ENCODE measurements at regions of chr16 and their contacts with region 1.

Region 1: GRCh38 chr16:81723098-81723723 is 55.9 kb upstream of the PLCG2 start:
- DNase-seq: peak in 1 of 10 donors; percentile 30
- H3K4me3 ChIP-seq: no peak overlapping the region
- H3K27ac ChIP-seq: no peak overlapping the region
- H3K27me3 ChIP-seq: no peaks in the 10 kb centered on the region
- CTCF ChIP-seq: peak; percentile 13 to 96 (median 85)

Region 2: GRCh38 chr16:81366316-81366932 is 356.8 kb before region 1 on chr16:
- intact Hi-C with region 1: loop called in 1 of 2 experiments (anchors 2 kb)
- DNase-seq: peak in 1 of 10 donors; percentile 9
- H3K4me3 ChIP-seq: no peak overlapping the region
- H3K27ac ChIP-seq: no peak overlapping the region
- H3K27me3 ChIP-seq: no peaks in the 10 kb centered on the region
- CTCF ChIP-seq: peak; percentile 61 to 90 (median 76)

Region 3: DNA sequence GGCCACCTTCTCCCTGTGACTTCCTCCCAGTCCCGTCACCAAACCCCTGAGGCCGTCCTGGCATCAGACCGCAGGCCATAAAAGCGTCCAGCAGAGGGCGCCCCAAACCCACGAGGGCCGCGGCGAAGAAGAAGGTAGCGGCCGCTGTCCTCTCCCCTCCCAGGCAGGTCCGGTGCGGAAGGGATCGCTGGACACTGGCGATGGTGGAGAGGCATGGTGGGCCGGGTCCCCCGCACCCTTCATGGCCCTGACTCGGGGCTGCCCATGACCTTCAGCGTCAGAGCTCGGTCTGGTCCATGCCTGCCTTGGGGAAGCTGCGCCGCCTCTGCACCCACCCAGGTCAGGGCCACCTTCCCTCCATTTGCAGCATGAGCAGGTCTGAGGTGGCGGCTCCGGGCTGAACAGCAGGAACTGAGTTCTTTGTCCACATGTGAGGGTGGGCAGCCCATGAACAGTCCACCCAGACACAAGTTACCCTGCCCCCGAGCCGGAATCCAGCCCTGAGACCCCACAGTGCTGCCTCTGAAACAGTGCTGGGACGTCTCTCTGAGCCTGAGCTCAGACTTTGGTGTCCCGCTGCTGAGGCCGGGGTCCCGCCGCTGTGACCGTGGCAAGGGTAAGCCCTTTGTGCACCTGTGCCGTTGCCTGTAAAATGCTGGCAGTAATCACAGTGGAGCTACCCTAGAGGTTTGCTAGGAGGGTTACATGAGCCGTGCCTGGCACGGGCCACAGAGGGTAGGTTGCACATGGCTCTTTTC is 319.4 kb before region 1 on chr16:
- intact Hi-C with region 1: loop called (anchors 1 to 2 kb)
- DNase-seq: peak; percentile 74 to 88 (median 80)
- H3K4me3 ChIP-seq: peak overlapping the region in 58 of 59 donors; percentile 1 to 67 (median 49)
- H3K27ac ChIP-seq: peak overlapping the region in 1 of 59 donors; percentile 48
- H3K27me3 ChIP-seq: peaks cover 0 to 2% (median 0%) of the 10 kb centered on the region in 45 donors
- CTCF ChIP-seq: peak; percentile 74 to 99 (median 97)

Region 4: DNA sequence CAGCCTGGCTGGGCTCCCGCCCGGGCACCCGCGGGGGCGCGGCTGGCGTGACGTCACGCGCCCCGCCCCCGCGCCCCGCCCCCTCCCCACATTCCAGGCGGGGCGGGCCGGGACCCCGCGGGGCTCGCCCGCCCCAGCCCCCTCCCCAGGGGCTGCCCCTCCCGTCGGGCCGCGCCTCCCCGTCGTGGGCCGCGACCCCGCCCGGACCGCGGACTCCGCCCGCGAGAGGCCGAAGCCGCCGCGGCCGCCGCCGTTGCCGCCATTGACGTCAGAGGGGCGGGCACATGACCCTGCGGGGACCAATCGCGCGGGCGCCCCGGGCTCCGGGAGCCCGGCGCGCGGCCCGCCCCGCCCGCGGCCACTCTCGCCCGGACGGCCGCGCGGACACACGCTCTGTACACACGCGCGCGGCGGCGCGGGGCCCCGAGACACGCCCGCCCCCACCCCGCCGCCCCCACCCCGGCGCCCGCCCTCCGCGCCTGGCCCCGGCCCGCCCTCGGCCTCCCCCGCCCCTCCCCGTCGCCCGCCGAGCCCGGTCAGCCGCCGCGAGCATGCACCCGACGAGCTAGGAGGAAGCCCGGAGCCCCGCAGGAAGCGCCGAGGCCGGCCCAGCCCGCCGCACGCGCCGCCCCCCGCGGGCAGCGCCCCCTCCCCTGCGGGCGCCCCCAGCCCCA is 278.6 kb before region 1 on chr16 and contains the start of gene CMIP:
- intact Hi-C with region 1: no loop called
- DNase-seq: peak; percentile 58 to 89 (median 72)
- H3K4me3 ChIP-seq: peak within 1 kb of the TSS; percentile 57 to 90 (median 79)
- H3K27ac ChIP-seq: peak within 1 kb of the TSS; percentile 27 to 94 (median 82)
- H3K27me3 ChIP-seq: no peaks in the 10 kb centered on the region
- CTCF ChIP-seq: no peak
- total RNA-seq, gene CMIP: 104 to 216 (median 159) TPM

Region 5: GRCh38 chr16:81680444-81681275 is 42.6 kb before region 1 on chr16:
- intact Hi-C with region 1: no loop called
- DNase-seq: no peak
- H3K4me3 ChIP-seq: no peak overlapping the region
- H3K27ac ChIP-seq: peak overlapping the region in 10 of 59 donors; percentile 1 to 42 (median 9)
- H3K27me3 ChIP-seq: no peaks in the 10 kb centered on the region
- CTCF ChIP-seq: no peak

Measured in dorsolateral prefrontal cortex (tissue), 120 donors.